Ascending aorta (tissue), 2 donors: ENCODE measurements at regions of chr1 and their contacts with region 1.

Region 1: GRCh38 chr1:26677306-26678115 is 18.3 kb upstream of the ARID1A start:
- DNase-seq: peak; percentile 36 to 90
- H3K4me3 ChIP-seq: peak overlapping the region; percentile 25 to 47
- H3K27ac ChIP-seq: peak overlapping the region; percentile 40 to 42
- H3K4me1 ChIP-seq: peaks cover 0 to 2% of the 10 kb centered on the region in 2 donors
- H3K27me3 ChIP-seq: no peaks in the 10 kb centered on the region
- CTCF ChIP-seq: peak; percentile 60 to 81 (median 71)

Region 2: DNA sequence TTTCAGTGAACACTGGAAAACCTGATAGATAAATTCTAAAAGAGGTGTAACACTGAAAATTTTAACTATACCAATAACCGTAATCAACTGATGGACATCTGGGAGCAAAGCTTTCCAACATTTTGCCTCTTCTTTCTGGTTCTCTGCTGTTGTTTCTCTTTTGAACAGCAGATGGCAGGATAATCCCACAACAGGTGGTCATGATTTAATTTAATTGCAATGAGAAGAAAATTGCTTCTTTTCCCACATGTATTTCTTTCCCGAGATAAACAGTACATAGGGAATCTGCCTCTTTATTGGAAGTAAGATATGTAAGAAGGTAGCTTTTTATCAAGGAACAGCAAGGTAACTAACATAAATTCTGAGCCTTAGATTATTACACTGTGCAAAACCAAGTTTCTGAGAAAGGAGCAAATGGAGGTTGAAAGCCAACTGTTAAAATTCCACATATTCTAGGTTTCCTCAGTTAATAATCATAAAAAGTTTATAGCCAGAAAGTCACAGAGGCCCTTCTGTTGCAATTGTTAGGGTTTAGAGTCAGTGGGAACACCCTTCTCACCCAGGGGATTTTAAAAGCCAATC is 75.0 kb before region 1 on chr1:
- intact Hi-C with region 1: loop called (anchors 1 kb)
- DNase-seq: no peak
- H3K4me3 ChIP-seq: no peak overlapping the region
- H3K27ac ChIP-seq: no peak overlapping the region
- H3K4me1 ChIP-seq: no peaks in the 10 kb centered on the region
- H3K27me3 ChIP-seq: no peaks in the 10 kb centered on the region
- CTCF ChIP-seq: peak; percentile 77 to 88 (median 85)